A673 (cell line): ENCODE measurements at regions of chr17 and their contacts with region 1.

Region 1: DNA sequence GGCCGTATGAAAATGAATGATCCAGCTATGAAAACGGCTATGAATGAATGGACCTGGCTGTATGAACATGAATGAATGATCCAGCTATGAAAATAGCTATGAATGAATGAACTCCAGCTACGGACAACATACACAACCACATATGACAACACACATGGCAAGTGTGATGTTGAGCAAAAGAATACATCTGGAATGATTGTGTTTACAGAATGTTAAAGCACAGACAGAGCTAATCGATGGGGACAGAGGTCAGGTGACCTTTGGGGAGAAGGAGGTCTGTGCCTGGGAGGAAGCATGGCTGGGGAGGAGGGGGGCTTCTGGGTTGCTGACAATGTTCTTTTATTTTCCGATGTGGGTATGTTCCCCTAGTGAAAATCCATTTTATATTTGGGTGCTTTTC is 174.0 kb upstream of the WSCD1 start:
- DNase-seq: no peak
- H3K4me3 ChIP-seq: no peak overlapping the region
- H3K27ac ChIP-seq: no peak overlapping the region
- H3K4me1 ChIP-seq: peaks cover 5% of the 10 kb centered on the region
- H3K27me3 ChIP-seq: peaks cover 42% of the 10 kb centered on the region
- CTCF ChIP-seq: no peak

Region 2: GRCh38 chr17:5516060-5516792 is 380.0 kb before region 1 on chr17:
- CTCF ChIA-PET with region 1: no interaction called
- POLR2A ChIA-PET with region 1: no interaction called
- intact Hi-C with region 1: no loop called
- DNase-seq: no peak
- H3K4me3 ChIP-seq: no peak overlapping the region
- H3K27ac ChIP-seq: no peak overlapping the region
- H3K4me1 ChIP-seq: no peaks in the 10 kb centered on the region
- H3K27me3 ChIP-seq: no peaks in the 10 kb centered on the region
- CTCF ChIP-seq: no peak

Region 3: GRCh38 chr17:6000426-6000825 is 104.2 kb after region 1 on chr17:
- CTCF ChIA-PET with region 1: no interaction called
- POLR2A ChIA-PET with region 1: interaction called, 10 read pairs
- intact Hi-C with region 1: no loop called
- DNase-seq: no peak
- H3K4me3 ChIP-seq: no peak overlapping the region
- H3K27ac ChIP-seq: no peak overlapping the region
- H3K4me1 ChIP-seq: no peaks in the 10 kb centered on the region
- H3K27me3 ChIP-seq: peaks cover 52% of the 10 kb centered on the region
- CTCF ChIP-seq: no peak